Activated T-helper 2 cell treated with anti-CD3 and anti-CD28 coated beads, Interferon-gamma antibody, Interleukin-2, Interleukin-4, amounts not matched to agents 10 μg/mL and 5 μg/mL and 100 μg/mL, durations not matched to agents 14 hours and 24 hours and 36 hours (primary cell): ENCODE measurements at regions of chr4 and their contacts with region 1.

Region 1: DNA sequence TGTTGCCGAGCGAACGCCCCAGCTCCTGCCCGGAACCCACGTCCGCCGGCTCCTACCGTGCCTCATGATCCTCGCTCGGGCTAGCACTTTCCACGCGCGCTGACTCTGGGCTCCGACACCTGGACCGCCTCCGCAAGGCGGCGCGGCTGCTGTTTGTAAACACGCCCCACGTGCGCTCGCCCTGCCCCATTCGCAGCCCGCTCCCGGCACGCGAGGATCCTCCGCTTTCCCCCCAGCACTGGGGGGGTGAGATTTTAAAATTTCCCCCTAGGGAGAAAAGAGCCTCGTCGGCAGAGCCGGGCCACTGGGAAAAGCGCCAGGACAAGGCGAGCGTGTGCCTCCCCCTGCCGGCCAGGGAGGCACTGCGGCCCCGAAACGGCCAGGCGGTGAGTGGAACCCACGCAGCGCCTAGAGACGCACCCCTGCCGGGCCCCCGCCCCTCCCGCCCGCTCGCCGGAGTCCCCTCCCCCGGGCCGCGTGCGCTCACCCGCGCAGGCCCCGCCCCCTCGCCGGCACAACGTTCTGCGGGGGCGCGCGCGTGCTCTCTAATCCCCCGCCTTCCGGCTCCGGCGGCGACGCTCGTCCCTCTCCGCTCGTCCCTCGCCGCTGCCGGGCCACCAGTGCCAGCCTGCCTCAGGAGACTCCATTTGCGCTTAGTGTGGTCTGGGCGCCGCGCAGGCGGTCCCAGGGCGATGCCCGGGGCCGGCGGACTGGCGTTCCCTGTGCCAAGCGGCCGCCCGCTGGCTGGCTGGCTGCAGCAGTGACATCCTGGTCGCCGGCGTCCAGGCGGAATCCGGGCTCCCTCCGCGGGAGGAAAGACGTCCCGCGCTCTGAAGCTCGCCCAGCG is at the start of gene TIGD2:
- DNase-seq: peak; percentile 80
- H3K4me3 Mint-ChIP-seq: peak within 1 kb of the TSS; percentile 84
- H3K27ac Mint-ChIP-seq: peak within 1 kb of the TSS; percentile 42
- H3K4me1 Mint-ChIP-seq: peaks cover 17% of the 10 kb centered on the region
- H3K27me3 Mint-ChIP-seq: peaks cover 22% of the 10 kb centered on the region
- total RNA-seq, gene TIGD2: 2.6 and 3.0 TPM in 2 replicates

Region 2: GRCh38 chr4:89024051-89024675 is 87.0 kb before region 1 on chr4:
- intact Hi-C with region 1: loop called (anchors 1 kb)
- DNase-seq: peak; percentile 14
- H3K4me3 Mint-ChIP-seq: no peak overlapping the region
- H3K27ac Mint-ChIP-seq: no peak overlapping the region
- H3K4me1 Mint-ChIP-seq: no peaks in the 10 kb centered on the region
- H3K27me3 Mint-ChIP-seq: peaks cover 2% of the 10 kb centered on the region

Region 3: DNA sequence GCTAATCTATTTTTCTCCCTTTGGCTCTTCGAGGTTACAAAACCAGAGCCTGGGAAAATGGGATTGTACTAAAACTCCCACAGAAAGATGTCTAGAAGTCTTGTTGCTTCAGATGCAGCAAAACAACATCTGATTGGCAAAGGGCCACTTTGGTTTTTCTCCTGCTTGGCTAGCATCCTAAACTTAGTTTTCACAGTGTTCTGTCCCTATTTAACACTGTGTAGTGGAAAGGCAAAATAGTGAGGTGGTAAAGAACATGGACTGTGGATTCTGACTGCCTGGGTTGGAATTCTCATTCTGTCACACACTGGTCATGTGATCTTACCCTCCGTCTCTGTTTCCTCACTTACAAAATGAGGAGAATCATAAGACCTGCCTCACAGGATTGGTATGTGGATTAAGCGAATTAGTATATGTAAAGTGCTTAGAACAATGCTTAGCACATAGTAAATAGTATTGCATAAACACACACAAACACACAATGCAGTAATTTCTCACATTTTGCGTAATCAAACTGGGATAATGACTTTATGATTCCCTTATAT is 23.6 kb after region 1 on chr4:
- intact Hi-C with region 1: loop called (anchors 2 kb)
- DNase-seq: no peak
- H3K4me3 Mint-ChIP-seq: no peak overlapping the region
- H3K27ac Mint-ChIP-seq: no peak overlapping the region
- H3K4me1 Mint-ChIP-seq: peaks cover 3% of the 10 kb centered on the region
- H3K27me3 Mint-ChIP-seq: peaks cover 8% of the 10 kb centered on the region